ENCODE measurements at regions of chr3 and their contacts with region 1.

Region 1: GRCh38 chr3:170985304-170985703 is 41.2 kb downstream of the SLC2A2 start:
- DNase-seq: no peak
- H3K4me3 ChIP-seq: no peak overlapping the region
- H3K27ac ChIP-seq: no peak overlapping the region
- H3K4me1 ChIP-seq: no peaks in the 10 kb centered on the region
- H3K27me3 ChIP-seq: no peaks in the 10 kb centered on the region
- CTCF ChIP-seq: no peak
- EP300 ChIP-seq: no peak
- POLR2A ChIP-seq: no peak

Region 2: GRCh38 chr3:170918715-170919114 is 66.6 kb before region 1 on chr3:
- in situ Hi-C with region 1: no loop called
- intact Hi-C with region 1: no loop called
- DNase-seq: no peak
- H3K4me3 ChIP-seq: no peak overlapping the region
- H3K27ac ChIP-seq: no peak overlapping the region
- H3K4me1 ChIP-seq: no peaks in the 10 kb centered on the region
- H3K27me3 ChIP-seq: no peaks in the 10 kb centered on the region
- CTCF ChIP-seq: no peak
- EP300 ChIP-seq: no peak
- POLR2A ChIP-seq: no peak

Region 3: DNA sequence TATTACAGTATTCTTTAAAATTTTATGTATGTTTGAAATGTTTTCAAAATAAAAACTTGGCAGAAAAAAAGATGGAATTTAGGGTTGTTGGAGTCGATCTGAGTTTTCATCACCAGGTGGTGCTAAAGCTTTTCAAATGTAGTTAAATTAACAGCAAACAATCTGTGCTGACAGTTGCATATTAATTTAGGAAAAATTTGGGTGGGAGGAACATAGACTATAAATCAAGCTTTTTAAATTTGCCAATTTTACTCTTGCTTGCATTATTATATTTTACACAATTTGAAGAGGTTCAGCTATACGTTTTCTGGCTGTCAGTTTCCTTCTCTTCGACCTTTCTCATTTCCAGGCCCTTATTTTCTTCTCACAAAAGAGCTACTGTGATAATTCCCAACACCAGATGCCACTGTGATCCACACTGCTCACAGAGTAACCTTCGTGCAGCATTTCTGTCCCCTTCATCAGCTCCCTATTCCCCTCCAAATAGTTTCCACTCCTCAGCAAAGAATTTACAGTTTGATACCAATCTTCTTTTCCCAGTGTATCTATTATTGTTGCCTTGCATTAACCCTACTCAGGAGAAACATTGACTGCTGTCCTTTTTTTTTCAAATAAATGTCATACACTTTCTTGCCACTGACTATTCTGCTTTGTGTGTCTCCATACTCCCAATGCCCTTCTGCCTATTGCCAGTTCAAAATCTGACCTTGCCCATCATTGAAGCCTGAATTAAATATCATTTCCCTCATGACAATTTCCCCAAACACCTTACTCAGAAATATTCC is 23.5 kb before region 1 on chr3:
- in situ Hi-C with region 1: no loop called
- intact Hi-C with region 1: loop called (anchors 1 kb)
- DNase-seq: no peak
- H3K4me3 ChIP-seq: no peak overlapping the region
- H3K27ac ChIP-seq: peak overlapping the region in 1 of 4 donors; percentile 35
- H3K4me1 ChIP-seq: peaks cover 0 to 10% (median 3%) of the 10 kb centered on the region in 4 donors
- H3K27me3 ChIP-seq: no peaks in the 10 kb centered on the region
- CTCF ChIP-seq: peak; percentile 47 to 69 (median 61)
- EP300 ChIP-seq: no peak
- POLR2A ChIP-seq: no peak

Measured in transverse colon (tissue), 4 donors.